Left colon (tissue), 2 donors: ENCODE measurements at regions of chr1 and their contacts with region 1.

Region 1: GRCh38 chr1:29033829-29034466 is 89.8 kb downstream of the TMEM200B start:
- DNase-seq: no peak
- ATAC-seq: peak; percentile 73

Region 2: GRCh38 chr1:28779751-28780408 is 254.1 kb before region 1 on chr1:
- intact Hi-C with region 1: loop called in 1 of 2 experiments (anchors 10 kb)
- DNase-seq: no peak
- ATAC-seq: no peak

Region 3: GRCh38 chr1:28860332-28861073 is 173.4 kb before region 1 on chr1:
- intact Hi-C with region 1: no loop called
- DNase-seq: peak; percentile 34 to 35
- ATAC-seq: peak; percentile 97

Region 4: GRCh38 chr1:28877132-28877781 is 156.7 kb before region 1 on chr1:
- intact Hi-C with region 1: loop called (anchors 2 to 5 kb)
- DNase-seq: peak; percentile 47 to 79
- ATAC-seq: peak; percentile 80

Region 5: DNA sequence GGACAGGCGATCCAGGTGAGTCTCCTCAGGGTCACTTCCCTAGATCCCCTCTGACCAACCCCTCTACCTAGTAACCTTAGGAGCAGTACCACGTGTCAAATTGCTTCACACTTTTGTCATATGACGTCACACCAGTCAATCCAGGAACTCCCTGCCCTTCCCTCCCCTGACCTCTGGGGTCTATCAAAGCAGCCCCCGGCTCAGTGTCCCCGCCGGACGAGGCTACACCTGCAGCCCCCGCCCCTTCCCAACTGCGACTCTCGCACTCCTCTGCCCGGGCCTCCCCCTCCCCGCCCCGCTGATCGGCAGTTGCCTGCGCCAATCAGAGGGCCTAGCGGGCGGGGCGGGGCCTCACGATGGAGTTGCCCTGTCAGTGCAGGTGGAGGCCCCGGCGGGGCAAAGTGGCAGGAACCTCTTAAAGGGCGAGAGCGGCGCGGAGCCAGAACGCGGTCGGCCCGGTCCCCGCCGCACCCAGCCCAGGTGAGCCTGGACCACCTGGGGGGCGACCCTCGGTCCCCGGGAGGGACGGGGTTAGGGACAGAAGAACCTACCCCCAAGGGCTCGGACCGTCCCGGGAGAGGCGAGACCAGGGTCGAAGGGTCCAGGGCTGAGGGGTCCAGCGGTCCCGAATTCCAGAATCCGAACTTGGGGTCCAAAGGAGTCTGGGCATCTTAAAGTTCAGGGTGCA is 147.1 kb before region 1 on chr1:
- intact Hi-C with region 1: loop called in 1 of 2 experiments (anchors 2 kb)
- DNase-seq: peak; percentile 90 to 93
- ATAC-seq: peak; percentile 83

Region 6: DNA sequence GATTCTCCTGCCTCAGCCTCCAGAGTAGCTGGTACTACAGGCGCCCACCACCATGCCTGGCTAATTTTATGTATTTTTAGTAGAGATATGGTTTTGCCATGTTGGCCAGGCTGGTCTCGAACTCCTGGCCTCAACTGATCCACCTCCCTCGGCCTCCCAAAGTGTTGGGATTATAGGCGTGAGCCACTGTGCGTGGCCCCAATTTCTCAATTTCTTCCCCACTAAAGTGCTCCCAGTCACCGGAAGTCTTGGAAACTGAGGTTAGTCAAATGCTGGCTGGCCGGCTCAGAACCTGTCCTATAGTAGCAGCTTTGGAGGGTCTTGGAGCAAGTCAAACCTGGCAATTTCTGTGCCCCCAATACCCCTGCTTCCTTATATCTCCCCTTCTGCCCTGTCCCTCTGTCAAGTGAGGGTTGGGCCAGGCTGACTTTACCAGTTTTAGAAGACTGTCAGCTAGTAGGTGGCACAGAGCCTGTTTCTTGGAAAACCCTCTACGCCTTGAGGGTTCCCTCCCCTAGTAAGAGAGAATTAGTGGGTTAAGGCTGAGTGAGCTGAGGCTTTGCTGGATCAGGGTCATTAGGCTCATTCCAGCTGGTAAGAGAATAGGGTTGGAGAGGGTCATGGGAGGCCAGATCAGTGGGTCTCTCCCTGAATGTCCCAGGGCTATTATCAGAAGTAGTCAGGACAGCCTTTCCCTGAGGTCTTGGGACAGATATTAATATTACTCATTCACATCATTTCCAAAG is 127.9 kb before region 1 on chr1:
- intact Hi-C with region 1: no loop called
- DNase-seq: no peak
- ATAC-seq: no peak

Region 7: DNA sequence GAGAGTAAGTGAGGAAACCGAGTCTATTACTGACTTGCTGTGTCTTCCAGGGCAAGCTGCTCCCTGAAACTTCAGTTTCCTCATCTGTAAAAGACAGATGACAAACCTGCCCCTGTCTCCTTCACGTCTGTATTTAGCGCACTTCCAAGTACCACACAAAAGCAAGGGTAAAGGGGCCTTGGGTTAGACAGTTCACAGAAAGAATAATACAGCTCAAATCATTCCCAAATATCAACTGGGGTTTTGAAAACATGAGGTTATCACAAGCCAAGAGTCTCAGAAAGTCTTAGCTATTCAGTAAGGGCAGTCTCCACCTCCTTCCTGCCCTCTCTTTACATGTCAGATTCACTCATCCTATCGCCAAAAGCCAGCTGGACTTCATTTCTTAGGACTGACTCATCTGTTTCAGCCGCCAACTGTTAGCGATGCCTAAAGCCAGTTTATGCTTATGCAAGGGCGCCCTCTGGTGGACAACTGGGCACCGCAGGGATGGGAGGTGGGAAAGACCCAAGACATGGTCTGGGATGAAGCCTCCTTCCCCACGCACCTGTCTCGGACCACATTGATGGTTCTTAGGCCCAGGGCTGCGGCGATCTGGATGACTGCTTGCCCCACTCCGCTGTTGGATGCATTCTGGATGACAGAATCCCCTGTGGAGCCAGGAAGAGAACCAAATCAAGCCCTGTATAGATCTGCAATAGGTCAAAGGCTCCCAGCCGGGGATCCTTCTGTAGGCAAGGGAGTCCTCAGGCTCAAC is 168.8 kb after region 1 on chr1:
- intact Hi-C with region 1: loop called in 1 of 2 experiments (anchors 5 kb)
- DNase-seq: peak; percentile 90 to 98
- ATAC-seq: peak; percentile 91